ENCODE measurements at regions of chr19 and their contacts with region 1.

Region 1: DNA sequence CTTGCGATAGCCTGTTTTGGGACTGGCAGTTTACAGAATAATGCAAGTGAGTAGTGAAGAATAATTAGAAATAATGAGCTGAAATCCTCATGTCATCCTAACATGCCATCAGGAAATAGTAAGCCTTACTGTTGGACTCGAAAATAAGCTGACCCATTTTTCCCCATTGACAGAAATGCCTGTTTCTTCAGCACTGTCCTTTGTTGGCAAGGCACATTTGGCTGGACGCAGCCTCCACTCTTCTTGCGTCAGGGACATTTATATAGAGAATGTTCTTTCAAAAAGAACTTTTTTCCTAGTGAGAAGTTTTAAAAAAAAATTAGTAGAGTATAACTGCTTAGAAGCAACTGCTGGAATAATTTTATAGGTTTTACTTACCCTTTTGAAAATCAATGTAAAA is 47.1 kb downstream of the ARHGAP35 start:
- DNase-seq: no peak
- ATAC-seq: no peak
- H3K4me3 Mint-ChIP-seq: no peak overlapping the region
- H3K27ac Mint-ChIP-seq: no peak overlapping the region
- H3K4me1 Mint-ChIP-seq: peaks cover 27% of the 10 kb centered on the region
- H3K27me3 Mint-ChIP-seq: no peaks in the 10 kb centered on the region
- CTCF ChIP-seq: no peak

Region 2: GRCh38 chr19:46878613-46879375 is 29.1 kb before region 1 on chr19:
- CTCF ChIA-PET with region 1: interaction called, 10 read pairs
- POLR2A ChIA-PET with region 1: no interaction called
- DNase-seq: no peak
- ATAC-seq: no peak
- H3K4me3 Mint-ChIP-seq: no peak overlapping the region
- H3K27ac Mint-ChIP-seq: peak overlapping the region; percentile 72
- H3K4me1 Mint-ChIP-seq: peaks cover 11% of the 10 kb centered on the region
- H3K27me3 Mint-ChIP-seq: no peaks in the 10 kb centered on the region
- CTCF ChIP-seq: no peak

Region 3: GRCh38 chr19:46890423-46891170 is 17.3 kb before region 1 on chr19:
- CTCF ChIA-PET with region 1: no interaction called
- POLR2A ChIA-PET with region 1: no interaction called
- DNase-seq: no peak
- ATAC-seq: no peak
- H3K4me3 Mint-ChIP-seq: no peak overlapping the region
- H3K27ac Mint-ChIP-seq: peak overlapping the region; percentile 24
- H3K4me1 Mint-ChIP-seq: peaks cover 16% of the 10 kb centered on the region
- H3K27me3 Mint-ChIP-seq: no peaks in the 10 kb centered on the region
- CTCF ChIP-seq: no peak

Region 4: DNA sequence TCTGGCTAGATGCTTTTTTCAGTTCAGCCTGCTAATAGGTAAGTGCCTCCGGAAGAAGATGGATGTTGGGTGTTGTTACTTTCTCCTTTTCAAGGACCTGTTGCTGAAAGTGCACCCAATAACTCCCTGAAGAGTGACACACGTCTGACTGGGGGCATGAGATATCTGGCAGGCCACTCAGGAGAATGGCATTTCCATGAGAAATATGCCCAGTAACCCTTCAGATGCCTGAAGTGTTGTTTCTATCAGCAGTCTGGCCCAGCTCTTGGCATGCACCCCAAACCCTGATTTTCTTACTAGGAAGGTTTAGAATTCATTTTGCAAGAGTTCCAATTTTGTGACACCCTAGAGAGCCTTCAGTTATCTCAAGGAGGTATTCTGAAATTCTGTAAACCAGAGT is 24.5 kb after region 1 on chr19:
- CTCF ChIA-PET with region 1: no interaction called
- POLR2A ChIA-PET with region 1: no interaction called
- DNase-seq: no peak
- ATAC-seq: no peak
- H3K4me3 Mint-ChIP-seq: no peak overlapping the region
- H3K27ac Mint-ChIP-seq: peak overlapping the region; percentile 61
- H3K4me1 Mint-ChIP-seq: peaks cover 12% of the 10 kb centered on the region
- H3K27me3 Mint-ChIP-seq: no peaks in the 10 kb centered on the region
- CTCF ChIP-seq: no peak